ENCODE measurements at regions of chr19 and their contacts with region 1.

Region 1: GRCh38 chr19:54882758-54883157 is 8.7 kb downstream of the FCAR start:
- DNase-seq: peak; percentile 76
- H3K4me3 ChIP-seq: no peak overlapping the region
- H3K27ac ChIP-seq: no peak overlapping the region
- H3K4me1 ChIP-seq: peaks cover 6% of the 10 kb centered on the region
- CTCF ChIP-seq: peak; percentile 71

Region 2: GRCh38 chr19:54820824-54821223 is 61.9 kb before region 1 on chr19:
- CTCF ChIA-PET with region 1: no interaction called
- POLR2A ChIA-PET with region 1: no interaction called
- intact Hi-C with region 1: no loop called
- DNase-seq: no peak
- H3K4me3 ChIP-seq: no peak overlapping the region
- H3K27ac ChIP-seq: no peak overlapping the region
- H3K4me1 ChIP-seq: no peaks in the 10 kb centered on the region
- CTCF ChIP-seq: no peak

Region 3: GRCh38 chr19:54952591-54953344 is 70.0 kb after region 1 on chr19:
- CTCF ChIA-PET with region 1: no interaction called
- POLR2A ChIA-PET with region 1: no interaction called
- intact Hi-C with region 1: no loop called
- DNase-seq: no peak
- H3K4me3 ChIP-seq: no peak overlapping the region
- H3K27ac ChIP-seq: no peak overlapping the region
- H3K4me1 ChIP-seq: peaks cover 34% of the 10 kb centered on the region
- CTCF ChIP-seq: no peak

Region 4: DNA sequence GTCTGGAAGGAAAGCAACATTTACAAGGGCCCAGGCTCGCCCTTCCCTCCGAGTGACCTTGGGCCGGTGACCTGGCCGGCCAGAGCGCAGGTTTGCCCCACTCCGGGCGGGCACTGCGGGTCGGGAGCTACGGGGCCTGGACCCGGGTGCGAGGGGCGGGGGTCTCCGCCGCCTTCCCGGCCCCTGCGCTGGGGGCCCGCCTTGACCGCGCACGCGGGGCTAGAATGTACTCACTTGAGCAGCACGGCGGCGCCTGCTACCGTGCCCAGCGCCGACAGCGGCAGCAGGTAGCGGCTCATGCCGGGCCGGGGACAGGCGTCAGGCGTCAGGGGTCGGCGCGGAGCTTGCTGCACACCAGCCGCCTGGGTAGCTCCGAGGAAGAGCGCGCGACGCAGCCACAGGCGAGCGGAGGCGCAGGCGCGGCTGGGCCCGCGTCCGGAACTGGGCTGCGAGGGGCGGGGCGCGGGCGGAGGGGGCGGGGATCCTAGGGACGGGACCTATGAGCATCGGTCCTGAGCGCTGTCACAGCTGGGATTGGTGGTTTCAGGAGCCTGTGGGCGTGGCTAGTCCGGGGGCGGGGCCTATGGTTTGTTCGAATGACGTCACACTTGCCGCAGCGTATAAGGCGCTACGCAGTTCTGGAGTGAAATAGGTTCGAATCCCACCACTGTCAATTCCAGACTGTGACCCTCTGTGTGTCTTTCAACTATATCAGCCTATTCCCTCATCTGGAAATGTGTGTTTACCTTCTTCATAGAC is 180.2 kb after region 1 on chr19 and contains the start of gene RDH13:
- CTCF ChIA-PET with region 1: no interaction called
- POLR2A ChIA-PET with region 1: no interaction called
- intact Hi-C with region 1: loop called (anchors 5 kb)
- DNase-seq: peak; percentile 98
- H3K4me3 ChIP-seq: peak within 1 kb of the TSS; percentile 84
- H3K27ac ChIP-seq: peak within 1 kb of the TSS; percentile 50
- H3K4me1 ChIP-seq: peaks cover 7% of the 10 kb centered on the region
- CTCF ChIP-seq: no peak
- total RNA-seq, gene RDH13: 23.1 and 29.5 TPM in 2 replicates